Activated CD8-positive, alpha-beta T cell treated with anti-CD3 and anti-CD28 coated beads for 36 hours (primary cell): ENCODE measurements at regions of chr14 and their contacts with region 1.

Region 1: GRCh38 chr14:103899316-103899715 is 28.9 kb upstream of the TDRD9 start:
- DNase-seq: no peak
- ATAC-seq: no peak
- H3K4me3 Mint-ChIP-seq: no peak overlapping the region
- H3K27ac Mint-ChIP-seq: no peak overlapping the region
- H3K4me1 Mint-ChIP-seq: peaks cover 5% of the 10 kb centered on the region
- H3K27me3 Mint-ChIP-seq: no peaks in the 10 kb centered on the region
- CTCF ChIP-seq: no peak

Region 2: GRCh38 chr14:103801459-103801858 is 97.9 kb before region 1 on chr14:
- CTCF ChIA-PET with region 1: interaction called, 18 read pairs
- POLR2A ChIA-PET with region 1: no interaction called
- intact Hi-C with region 1: no loop called
- DNase-seq: no peak
- ATAC-seq: no peak
- H3K4me3 Mint-ChIP-seq: no peak overlapping the region
- H3K27ac Mint-ChIP-seq: no peak overlapping the region
- H3K4me1 Mint-ChIP-seq: peaks cover under 1% of the 10 kb centered on the region
- H3K27me3 Mint-ChIP-seq: no peaks in the 10 kb centered on the region
- CTCF ChIP-seq: no peak

Region 3: GRCh38 chr14:103880348-103881267 is 18.7 kb before region 1 on chr14:
- CTCF ChIA-PET with region 1: interaction called, 34 read pairs
- POLR2A ChIA-PET with region 1: interaction called, 3 read pairs
- intact Hi-C with region 1: no loop called
- DNase-seq: peak; percentile 41
- ATAC-seq: no peak
- H3K4me3 Mint-ChIP-seq: peak overlapping the region; percentile 24
- H3K27ac Mint-ChIP-seq: no peak overlapping the region
- H3K4me1 Mint-ChIP-seq: peaks cover 19% of the 10 kb centered on the region
- H3K27me3 Mint-ChIP-seq: peaks cover 4% of the 10 kb centered on the region
- CTCF ChIP-seq: no peak

Region 4: DNA sequence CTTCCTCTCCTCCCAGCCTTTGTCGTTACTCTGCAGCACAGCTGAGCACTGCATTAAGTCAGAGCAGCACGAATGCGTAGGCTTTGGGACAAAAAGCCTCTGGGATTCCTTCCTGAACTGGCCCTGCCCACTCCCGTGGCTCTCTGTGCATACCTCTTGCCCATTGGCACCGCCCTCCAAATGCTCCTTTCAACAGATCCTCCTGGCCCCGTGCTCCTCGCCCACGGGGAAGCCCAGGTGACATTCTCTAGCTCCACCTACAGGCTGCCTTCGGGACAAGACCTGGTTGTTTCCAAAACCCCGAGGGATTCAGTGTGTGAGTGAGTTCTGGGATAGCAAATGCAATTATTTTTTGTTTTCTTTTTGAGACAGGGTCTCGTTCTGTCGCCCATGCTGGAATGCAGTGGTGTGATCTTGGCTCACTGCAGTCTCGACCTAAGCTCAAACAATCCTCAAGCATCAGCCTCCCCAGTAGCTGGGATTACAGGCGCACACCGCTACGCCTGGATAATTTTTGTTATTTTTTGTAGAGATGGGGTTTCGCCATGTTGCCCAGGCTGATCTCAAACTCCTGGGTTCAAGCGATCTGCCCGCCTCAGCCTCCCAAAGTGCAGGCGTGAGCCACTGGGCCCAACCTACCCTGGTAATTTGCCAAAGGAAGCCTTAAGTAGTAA is 11.1 kb after region 1 on chr14:
- CTCF ChIA-PET with region 1: interaction called, 59 read pairs
- POLR2A ChIA-PET with region 1: no interaction called
- intact Hi-C with region 1: no loop called
- DNase-seq: peak; percentile 84
- ATAC-seq: peak; percentile 90
- H3K4me3 Mint-ChIP-seq: peak overlapping the region; percentile 22
- H3K27ac Mint-ChIP-seq: peak overlapping the region; percentile 71
- H3K4me1 Mint-ChIP-seq: peaks cover 24% of the 10 kb centered on the region
- H3K27me3 Mint-ChIP-seq: no peaks in the 10 kb centered on the region
- CTCF ChIP-seq: peak; percentile 83

Region 5: GRCh38 chr14:103920981-103921854 is 21.9 kb after region 1 on chr14:
- CTCF ChIA-PET with region 1: interaction called, 59 read pairs
- POLR2A ChIA-PET with region 1: no interaction called
- intact Hi-C with region 1: no loop called
- DNase-seq: peak; percentile 92
- ATAC-seq: peak; percentile 100
- H3K4me3 Mint-ChIP-seq: peak overlapping the region; percentile 85
- H3K27ac Mint-ChIP-seq: peak overlapping the region; percentile 78
- H3K4me1 Mint-ChIP-seq: peaks cover 15% of the 10 kb centered on the region
- H3K27me3 Mint-ChIP-seq: peaks cover 5% of the 10 kb centered on the region
- CTCF ChIP-seq: peak; percentile 93

Region 6: DNA sequence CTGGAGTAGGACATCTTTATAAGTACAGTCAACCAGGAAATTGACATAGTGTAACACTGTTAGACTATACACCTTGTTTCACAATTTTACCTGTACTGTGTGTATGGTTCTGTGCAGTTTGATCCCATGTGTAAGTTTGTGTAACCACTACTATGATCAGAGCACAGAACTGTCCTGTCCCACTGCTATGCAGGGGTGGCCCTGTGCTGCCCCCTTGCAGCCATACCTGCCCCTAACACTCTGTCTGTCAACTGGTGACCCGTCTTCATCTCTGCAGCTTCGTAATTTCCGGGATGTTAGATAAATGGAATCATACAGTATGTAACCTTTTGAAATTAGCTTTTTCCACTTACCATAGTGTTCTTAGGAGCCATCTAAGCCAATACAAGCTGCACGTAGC is 101.7 kb after region 1 on chr14:
- CTCF ChIA-PET with region 1: no interaction called
- POLR2A ChIA-PET with region 1: no interaction called
- intact Hi-C with region 1: no loop called
- DNase-seq: peak; percentile 43
- ATAC-seq: peak; percentile 72
- H3K4me3 Mint-ChIP-seq: no peak overlapping the region
- H3K27ac Mint-ChIP-seq: no peak overlapping the region
- H3K4me1 Mint-ChIP-seq: no peaks in the 10 kb centered on the region
- H3K27me3 Mint-ChIP-seq: peaks cover 4% of the 10 kb centered on the region
- CTCF ChIP-seq: peak; percentile 30